Cardiac septum (tissue), 1 donor: ENCODE measurements at regions of chr2 and their contacts with region 1.

Region 1: GRCh38 chr2:62456721-62457539 is 49.1 kb downstream of the TMEM17 start:
- DNase-seq: peak; percentile 86

Region 2: DNA sequence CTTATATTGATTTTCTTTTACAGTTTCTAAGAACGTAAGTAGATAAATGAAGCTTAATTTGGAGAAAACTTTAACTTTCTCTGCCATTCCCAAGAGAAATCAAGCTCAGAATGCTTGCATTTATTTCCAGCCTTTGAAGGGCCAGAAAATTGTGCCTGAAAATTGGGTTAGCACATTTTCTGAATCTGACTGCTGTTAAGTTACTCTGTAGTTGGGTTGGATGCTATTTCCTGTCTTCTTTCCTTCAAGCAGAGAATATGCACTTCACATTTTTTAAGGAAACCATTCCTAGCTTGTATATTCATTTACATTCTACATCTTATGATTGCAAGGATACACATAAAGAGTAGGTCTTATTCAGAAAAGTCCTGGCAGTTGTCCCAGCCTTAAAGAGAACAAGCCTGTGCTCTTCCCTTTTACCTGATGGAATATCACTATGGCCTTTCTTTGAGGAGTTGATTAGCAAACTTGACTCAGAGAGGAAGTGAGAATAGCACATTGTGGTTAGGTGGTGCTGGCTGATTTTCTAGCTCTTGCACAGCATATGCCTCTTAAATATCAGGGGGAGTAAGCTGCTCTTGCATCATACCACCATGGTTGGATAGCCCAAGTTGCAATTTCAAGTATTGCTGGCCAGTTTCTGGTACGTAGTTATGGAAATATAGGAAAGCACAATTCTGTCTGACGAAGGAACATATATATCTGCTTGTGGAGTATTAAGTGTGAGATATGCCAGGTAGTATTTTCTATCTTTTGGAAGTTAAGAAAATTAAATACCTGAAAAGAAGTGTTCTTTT is 417.8 kb before region 1 on chr2:
- intact Hi-C with region 1: no loop called
- DNase-seq: no peak

Region 3: DNA sequence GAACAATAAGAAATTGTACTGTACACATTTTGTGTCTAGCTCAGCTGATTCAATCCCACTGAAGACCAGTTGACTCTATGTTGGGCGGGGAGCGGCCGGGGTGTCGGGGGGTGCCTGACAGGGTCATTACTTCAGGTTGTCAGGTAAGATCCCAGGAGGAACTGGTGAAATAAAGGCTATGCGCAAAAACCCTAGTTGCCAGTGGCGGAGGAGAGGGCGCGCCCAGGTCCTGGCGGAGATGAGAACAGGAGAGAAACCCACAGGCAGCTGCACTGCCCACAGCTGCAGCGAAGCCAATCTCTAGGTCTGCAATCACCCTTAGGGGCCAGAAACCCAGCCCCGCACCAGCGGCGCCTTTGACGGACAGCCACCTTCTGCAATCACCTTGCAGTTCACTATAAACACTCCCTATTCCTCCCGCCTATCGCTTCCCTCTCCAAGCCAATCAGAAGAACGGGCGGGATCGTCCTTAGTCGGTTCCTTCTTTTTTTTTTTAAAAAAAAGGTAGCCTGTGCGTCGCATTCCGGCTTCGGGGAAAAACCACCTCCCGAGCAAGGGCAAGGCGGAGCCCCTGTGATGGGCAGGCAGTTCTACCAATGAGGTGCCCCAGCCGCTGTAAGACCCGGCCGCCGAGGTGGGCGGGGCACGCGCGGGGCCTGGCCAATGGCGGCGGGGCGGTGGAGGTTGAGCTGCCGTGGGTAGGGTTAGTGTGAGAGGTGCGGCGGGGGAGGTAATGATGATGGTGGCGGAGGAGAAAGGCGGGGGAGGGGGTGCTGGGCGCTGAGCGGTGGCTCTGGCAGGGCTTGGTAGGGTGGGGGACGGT is 248.3 kb after region 1 on chr2 and contains the start of gene EHBP1:
- intact Hi-C with region 1: loop called (anchors 5 kb)
- DNase-seq: peak; percentile 100
- total RNA-seq, gene EHBP1: 19.4 TPM

Region 4: DNA sequence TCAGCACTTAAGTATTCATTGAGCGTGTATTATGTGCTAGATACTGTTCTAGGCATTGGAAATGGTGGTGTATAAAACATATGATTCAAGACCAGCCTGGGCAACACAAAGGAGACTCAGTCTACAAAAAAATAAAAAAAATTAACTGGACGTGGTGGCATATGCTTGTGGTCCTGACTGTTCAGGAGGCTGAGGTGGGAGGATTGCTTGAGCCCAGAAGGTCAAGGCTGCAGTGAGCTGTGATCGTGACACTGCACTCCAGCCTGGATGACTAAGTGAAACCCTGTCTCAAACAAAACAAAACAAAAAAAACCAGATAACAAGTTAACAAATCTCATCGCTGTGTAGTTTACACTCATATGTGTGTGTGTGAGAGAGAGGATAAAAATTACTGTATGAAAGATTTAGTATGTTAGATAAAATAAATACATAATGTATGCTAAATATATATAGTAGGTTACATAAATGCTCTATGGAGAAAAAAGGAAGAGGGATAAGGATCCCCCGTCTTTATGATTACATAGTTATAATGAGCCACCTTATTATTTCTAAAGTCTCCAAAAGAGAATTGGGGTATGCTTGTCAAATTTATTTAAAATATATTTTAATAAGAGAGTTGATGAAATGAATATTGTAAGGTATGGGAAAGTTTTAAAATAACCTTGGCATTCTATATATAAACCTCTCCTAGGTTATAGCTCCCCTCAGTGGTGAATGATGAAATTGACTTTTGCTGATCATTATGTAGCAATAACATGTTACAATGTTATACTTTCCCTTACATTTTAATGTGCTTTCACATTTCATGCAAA is 317.8 kb after region 1 on chr2:
- intact Hi-C with region 1: loop called (anchors 1 kb)
- DNase-seq: no peak